ENCODE measurements at regions of chr6 and their contacts with region 1.

Region 1: DNA sequence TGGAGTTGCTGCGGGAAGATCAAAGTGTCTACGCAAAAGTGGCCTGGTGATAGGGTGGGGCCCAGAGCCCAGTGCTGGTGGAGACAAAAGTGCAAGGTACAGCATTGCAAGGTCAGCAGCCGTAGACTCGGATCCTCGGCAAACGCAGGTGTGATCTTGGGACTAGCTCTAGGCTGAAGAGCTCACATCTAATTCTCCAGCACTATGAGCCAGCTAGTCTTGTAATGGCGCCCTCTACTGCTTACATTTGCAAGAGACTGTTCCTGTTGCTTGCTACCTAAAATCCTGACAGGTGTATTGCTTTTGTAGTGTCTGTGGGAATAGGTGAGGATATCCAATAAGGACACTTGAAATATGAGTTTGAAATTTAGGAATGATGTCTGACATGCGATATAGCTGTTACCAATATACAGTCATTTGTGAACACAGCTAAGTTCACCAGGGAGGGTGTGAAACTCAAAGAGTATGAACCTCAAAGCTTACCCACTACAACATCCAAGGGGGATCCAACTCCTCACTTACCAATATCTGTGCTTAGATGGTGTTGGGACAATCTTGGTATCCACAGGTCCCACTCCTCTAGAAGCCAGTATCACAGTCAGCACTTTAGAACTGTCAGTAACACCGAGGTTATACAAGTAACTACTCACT is 58.4 kb downstream of the PDE7B start:
- DNase-seq: peak; percentile 11 to 72 (median 52)
- H3K4me3 ChIP-seq: no peak overlapping the region
- H3K4me3 Mint-ChIP-seq: no peak overlapping the region
- H3K27ac ChIP-seq: no peak overlapping the region
- H3K27ac Mint-ChIP-seq: peak overlapping the region in 1 of 8 donors; percentile 14
- H3K4me1 ChIP-seq: no peaks in the 10 kb centered on the region
- H3K4me1 Mint-ChIP-seq: peaks cover 3 to 5% (median 4%) of the 10 kb centered on the region in 3 donors
- H3K27me3 ChIP-seq: no peaks in the 10 kb centered on the region
- H3K27me3 Mint-ChIP-seq: no peaks in the 10 kb centered on the region

Region 2: GRCh38 chr6:135535989-135536414 is 373.9 kb before region 1 on chr6:
- CTCF ChIA-PET with region 1: interaction called, 21 read pairs
- POLR2A ChIA-PET with region 1: interaction called, 6 read pairs
- DNase-seq: peak in 2 of 5 donors; percentile 17 to 35
- H3K4me3 ChIP-seq: no peak overlapping the region
- H3K4me3 Mint-ChIP-seq: peak overlapping the region in 6 of 7 donors; percentile 2 to 72 (median 54)
- H3K27ac ChIP-seq: no peak overlapping the region
- H3K27ac Mint-ChIP-seq: peak overlapping the region in 3 of 8 donors; percentile 41 to 79 (median 72)
- H3K4me1 ChIP-seq: peaks cover 6% of the 10 kb centered on the region
- H3K4me1 Mint-ChIP-seq: peaks cover 13 to 25% (median 19%) of the 10 kb centered on the region in 3 donors
- H3K27me3 ChIP-seq: no peaks in the 10 kb centered on the region
- H3K27me3 Mint-ChIP-seq: peaks cover 4 to 12% of the 10 kb centered on the region in 2 donors

Region 3: GRCh38 chr6:135675862-135676261 is 234.0 kb before region 1 on chr6:
- CTCF ChIA-PET with region 1: interaction called, 10 read pairs
- POLR2A ChIA-PET with region 1: no interaction called
- DNase-seq: peak in 2 of 5 donors; percentile 30 to 54
- H3K4me3 ChIP-seq: no peak overlapping the region
- H3K4me3 Mint-ChIP-seq: no peak overlapping the region
- H3K27ac ChIP-seq: no peak overlapping the region
- H3K27ac Mint-ChIP-seq: no peak overlapping the region
- H3K4me1 ChIP-seq: no peaks in the 10 kb centered on the region
- H3K4me1 Mint-ChIP-seq: no peaks in the 10 kb centered on the region
- H3K27me3 ChIP-seq: no peaks in the 10 kb centered on the region
- H3K27me3 Mint-ChIP-seq: no peaks in the 10 kb centered on the region

Region 4: DNA sequence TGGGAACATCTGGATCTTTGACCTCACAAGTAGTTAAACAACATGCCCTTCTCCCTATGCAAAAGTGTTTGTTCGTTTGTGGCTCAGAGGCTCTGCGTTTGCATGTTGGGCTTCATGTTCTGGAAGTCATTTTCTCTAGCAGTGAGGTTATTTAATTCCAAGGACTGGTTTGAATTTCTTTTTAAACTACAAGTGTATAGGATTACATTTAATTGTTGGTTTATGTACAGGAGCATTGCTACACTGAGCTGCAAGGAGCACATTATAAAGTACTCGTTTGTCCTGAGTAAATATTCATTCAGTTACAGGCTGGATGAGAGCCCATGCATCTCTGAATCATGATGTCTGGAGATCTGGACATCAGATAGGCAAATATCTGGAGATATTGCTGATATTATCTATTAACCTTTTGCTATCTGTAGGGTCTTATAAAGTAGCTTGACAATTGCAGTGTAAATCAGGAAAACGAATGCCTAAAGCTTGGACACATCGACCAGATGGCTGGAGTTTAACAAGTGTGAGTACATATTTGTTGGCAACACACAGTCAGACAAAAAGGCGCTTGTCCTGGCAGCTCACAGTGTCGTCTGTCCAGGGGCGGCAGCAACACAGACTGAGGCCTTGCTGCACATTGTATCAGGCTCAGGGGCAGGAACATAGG is 26.2 kb after region 1 on chr6:
- CTCF ChIA-PET with region 1: no interaction called
- POLR2A ChIA-PET with region 1: no interaction called
- DNase-seq: no peak
- H3K4me3 ChIP-seq: no peak overlapping the region
- H3K4me3 Mint-ChIP-seq: no peak overlapping the region
- H3K27ac ChIP-seq: no peak overlapping the region
- H3K27ac Mint-ChIP-seq: no peak overlapping the region
- H3K4me1 ChIP-seq: no peaks in the 10 kb centered on the region
- H3K4me1 Mint-ChIP-seq: no peaks in the 10 kb centered on the region
- H3K27me3 ChIP-seq: no peaks in the 10 kb centered on the region
- H3K27me3 Mint-ChIP-seq: no peaks in the 10 kb centered on the region